ENCODE measurements at regions of chr5 and their contacts with region 1.

Region 1: GRCh38 chr5:140690941-140691924 is at the starts of genes HARS1 and HARS2:
- DNase-seq: peak; percentile 92
- H3K4me3 ChIP-seq: peak within 1 kb of the TSS; percentile 86
- H3K27ac ChIP-seq: peak within 1 kb of the TSS; percentile 38
- H3K4me1 ChIP-seq: peaks cover 17% of the 10 kb centered on the region
- CTCF ChIP-seq: no peak
- total RNA-seq, gene HARS1: 43.7 and 44.3 TPM in 2 replicates
- total RNA-seq, gene HARS2: 20.8 and 23.4 TPM in 2 replicates

Region 2: DNA sequence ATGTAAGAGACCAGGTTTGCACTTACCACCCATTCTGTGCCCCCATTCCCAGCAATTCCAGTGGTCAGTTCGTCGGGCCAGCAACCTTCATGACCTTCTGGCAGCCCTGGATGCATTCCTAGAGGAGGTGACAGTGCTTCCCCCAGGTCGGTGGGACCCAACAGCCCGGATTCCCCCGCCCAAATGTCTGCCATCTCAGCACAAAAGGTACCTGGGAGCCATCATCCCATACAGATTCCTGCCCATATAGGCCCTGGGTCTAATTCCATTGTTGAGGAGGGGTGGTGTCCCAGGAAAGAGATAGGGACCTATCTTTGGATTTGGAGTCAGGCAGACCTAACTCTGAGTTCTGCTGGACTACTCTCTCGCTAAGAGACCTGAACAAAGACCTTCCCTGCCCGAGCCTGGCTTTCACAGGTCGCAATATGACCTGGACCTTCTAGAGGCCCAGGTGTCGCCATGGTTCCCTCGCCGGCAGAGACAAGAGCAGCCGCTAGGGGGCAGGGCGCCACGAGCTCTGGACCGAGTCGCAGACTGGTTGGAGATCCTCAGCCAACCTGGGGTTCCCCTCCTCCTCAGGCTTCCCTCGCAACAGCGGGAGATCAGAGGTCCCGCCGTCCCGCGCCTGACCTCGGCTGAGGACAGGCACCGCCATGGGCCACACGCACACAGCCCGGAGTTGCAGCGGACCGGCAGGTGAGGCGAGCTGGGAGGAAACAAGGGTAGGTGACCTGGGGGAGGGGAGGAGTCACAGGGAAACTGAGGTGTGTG is 328.2 kb before region 1 on chr5:
- CTCF ChIA-PET with region 1: no interaction called
- POLR2A ChIA-PET with region 1: no interaction called
- intact Hi-C with region 1: no loop called
- DNase-seq: peak; percentile 78
- H3K4me3 ChIP-seq: peak overlapping the region; percentile 42
- H3K27ac ChIP-seq: no peak overlapping the region
- H3K4me1 ChIP-seq: peaks cover 3% of the 10 kb centered on the region
- CTCF ChIP-seq: peak; percentile 94

Region 3: DNA sequence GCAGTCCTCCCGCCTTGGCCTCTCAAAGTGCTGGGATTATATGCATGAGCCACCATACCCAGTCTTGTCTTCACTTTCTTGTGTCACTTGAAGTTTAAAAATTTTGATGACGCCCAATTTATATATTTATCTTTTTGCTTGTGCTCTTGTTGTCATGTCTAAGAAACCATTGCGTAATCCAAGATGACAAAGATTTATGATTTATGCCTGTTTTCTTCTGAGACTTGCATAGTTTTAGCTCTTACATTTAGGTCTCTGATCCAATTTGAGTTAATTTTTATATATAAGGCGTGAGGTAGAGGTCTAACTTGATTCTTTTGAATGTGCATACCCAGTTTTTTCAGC is 271.0 kb before region 1 on chr5:
- CTCF ChIA-PET with region 1: no interaction called
- POLR2A ChIA-PET with region 1: no interaction called
- intact Hi-C with region 1: no loop called
- DNase-seq: no peak
- H3K4me3 ChIP-seq: no peak overlapping the region
- H3K27ac ChIP-seq: no peak overlapping the region
- H3K4me1 ChIP-seq: peaks cover 9% of the 10 kb centered on the region
- CTCF ChIP-seq: no peak

Region 4: DNA sequence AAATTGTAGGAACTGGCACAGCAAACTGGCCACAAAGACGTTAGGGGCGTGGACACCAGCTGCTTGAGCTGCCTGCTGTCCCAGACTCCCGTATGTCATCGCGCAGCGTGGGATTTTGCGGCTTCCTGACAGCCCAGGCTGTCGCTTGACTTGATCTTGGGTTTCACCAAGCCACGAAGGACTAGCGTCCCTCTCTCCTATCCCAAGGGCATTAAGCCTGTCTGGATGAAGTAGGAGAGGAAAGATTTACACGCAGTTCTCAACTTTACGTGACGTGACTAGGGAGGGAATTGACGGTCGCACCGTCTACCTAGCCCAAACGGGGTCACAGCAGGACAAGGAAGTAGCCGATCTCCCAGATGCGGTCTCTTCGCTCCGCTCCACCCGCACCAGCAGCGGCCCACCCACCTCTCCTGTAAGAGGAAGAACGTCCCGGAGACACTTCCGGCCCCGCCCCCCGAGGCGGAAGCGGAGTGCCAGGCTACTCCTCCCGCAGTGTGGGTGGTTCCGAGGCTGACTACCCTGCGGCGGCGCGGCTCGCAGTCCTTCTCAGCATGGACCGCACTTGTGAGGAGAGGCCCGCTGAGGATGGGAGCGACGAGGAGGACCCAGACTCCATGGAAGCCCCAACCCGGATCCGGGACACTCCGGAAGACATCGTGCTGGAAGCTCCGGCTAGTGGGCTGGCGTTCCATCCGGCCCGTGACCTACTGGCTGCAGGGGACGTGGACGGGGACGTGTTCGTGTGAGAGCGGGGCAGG is 26.7 kb before region 1 on chr5 and contains the start of gene WDR55:
- CTCF ChIA-PET with region 1: interaction called, 3 read pairs
- POLR2A ChIA-PET with region 1: interaction called, 6 read pairs
- intact Hi-C with region 1: loop called (anchors 1 kb)
- DNase-seq: peak; percentile 90
- H3K4me3 ChIP-seq: peak within 1 kb of the TSS; percentile 95
- H3K27ac ChIP-seq: peak within 1 kb of the TSS; percentile 39
- H3K4me1 ChIP-seq: peaks cover 17% of the 10 kb centered on the region
- CTCF ChIP-seq: no peak
- total RNA-seq, gene WDR55: 18.7 and 23.9 TPM in 2 replicates